ENCODE measurements at regions of chr1 and their contacts with region 1.

Region 1: DNA sequence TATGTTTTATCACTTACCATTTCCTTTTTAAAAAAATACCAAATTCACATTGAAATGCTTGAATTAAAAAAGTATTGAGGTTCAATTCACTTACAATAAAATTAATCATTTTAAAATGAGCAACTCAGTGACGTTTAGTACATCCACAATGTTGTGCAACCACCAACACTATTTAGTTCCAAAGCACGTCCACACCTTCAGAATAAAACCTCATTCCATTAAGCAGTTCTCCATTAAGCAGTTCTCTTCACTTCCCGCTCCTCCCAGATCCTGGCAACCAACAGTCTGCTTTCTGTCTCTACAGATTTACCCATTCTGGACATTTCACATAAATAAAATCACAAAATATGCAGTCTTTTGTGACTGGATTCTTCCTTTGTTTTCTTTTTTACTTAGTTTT is 41.3 kb downstream of the GNG4 start:
- DNase-seq: no peak
- H3K4me3 ChIP-seq: no peak overlapping the region
- H3K27ac ChIP-seq: no peak overlapping the region
- H3K4me1 ChIP-seq: no peaks in the 10 kb centered on the region
- H3K27me3 ChIP-seq: no peaks in the 10 kb centered on the region
- CTCF ChIP-seq: no peak
- POLR2A ChIP-seq: no peak

Region 2: GRCh38 chr1:235375919-235376605 is 232.2 kb before region 1 on chr1:
- CTCF ChIA-PET with region 1: no interaction called
- POLR2A ChIA-PET with region 1: no interaction called
- dilution Hi-C with region 1: no loop called
- intact Hi-C with region 1: no loop called
- DNase-seq: no peak
- H3K4me3 ChIP-seq: no peak overlapping the region
- H3K27ac ChIP-seq: no peak overlapping the region
- H3K4me1 ChIP-seq: no peaks in the 10 kb centered on the region
- H3K27me3 ChIP-seq: no peaks in the 10 kb centered on the region
- CTCF ChIP-seq: no peak
- POLR2A ChIP-seq: no peak

Region 3: GRCh38 chr1:235532360-235532759 is 75.9 kb before region 1 on chr1:
- CTCF ChIA-PET with region 1: no interaction called
- POLR2A ChIA-PET with region 1: no interaction called
- dilution Hi-C with region 1: no loop called
- intact Hi-C with region 1: no loop called
- DNase-seq: no peak
- H3K4me3 ChIP-seq: no peak overlapping the region
- H3K27ac ChIP-seq: no peak overlapping the region
- H3K4me1 ChIP-seq: no peaks in the 10 kb centered on the region
- H3K27me3 ChIP-seq: no peaks in the 10 kb centered on the region
- CTCF ChIP-seq: no peak
- POLR2A ChIP-seq: no peak

Region 4: DNA sequence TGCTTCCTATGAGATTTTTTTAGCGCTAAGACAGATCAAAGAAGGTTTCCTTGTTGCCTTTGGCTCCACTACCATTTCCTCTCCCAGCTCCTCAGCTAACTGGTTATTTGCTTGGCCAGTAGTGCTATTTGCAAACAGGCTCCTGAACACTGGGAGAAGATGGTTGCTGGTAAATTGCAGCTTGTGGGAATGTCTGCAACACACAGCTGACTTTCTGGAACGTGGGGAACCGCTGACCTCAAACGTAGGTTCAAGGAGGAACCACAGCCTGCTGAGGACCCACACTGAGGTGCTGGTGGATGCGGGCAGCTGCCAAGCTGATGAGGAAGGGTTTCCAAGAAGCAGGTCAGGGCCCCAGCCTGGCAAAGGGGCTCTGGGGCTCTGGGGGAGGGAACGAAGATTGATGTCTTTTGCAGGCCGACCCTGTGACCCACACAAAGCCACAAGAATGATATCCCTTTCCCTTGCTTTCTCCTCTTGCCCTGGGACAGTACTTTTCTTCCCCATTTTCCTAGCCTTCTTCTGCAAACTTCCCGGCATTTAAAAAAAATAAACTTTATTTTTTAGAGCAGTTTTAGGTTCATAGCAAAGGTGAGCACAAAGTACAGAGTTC is 16.5 kb after region 1 on chr1:
- CTCF ChIA-PET with region 1: no interaction called
- POLR2A ChIA-PET with region 1: no interaction called
- dilution Hi-C with region 1: no loop called
- intact Hi-C with region 1: loop called (anchors 2 kb)
- DNase-seq: peak; percentile 73
- H3K4me3 ChIP-seq: no peak overlapping the region
- H3K27ac ChIP-seq: no peak overlapping the region
- H3K4me1 ChIP-seq: no peaks in the 10 kb centered on the region
- H3K27me3 ChIP-seq: peaks cover 4 to 9% of the 10 kb centered on the region in 2 experiments
- CTCF ChIP-seq: no peak
- POLR2A ChIP-seq: no peak